ENCODE measurements at regions of chr14 and their contacts with region 1.

Region 1: DNA sequence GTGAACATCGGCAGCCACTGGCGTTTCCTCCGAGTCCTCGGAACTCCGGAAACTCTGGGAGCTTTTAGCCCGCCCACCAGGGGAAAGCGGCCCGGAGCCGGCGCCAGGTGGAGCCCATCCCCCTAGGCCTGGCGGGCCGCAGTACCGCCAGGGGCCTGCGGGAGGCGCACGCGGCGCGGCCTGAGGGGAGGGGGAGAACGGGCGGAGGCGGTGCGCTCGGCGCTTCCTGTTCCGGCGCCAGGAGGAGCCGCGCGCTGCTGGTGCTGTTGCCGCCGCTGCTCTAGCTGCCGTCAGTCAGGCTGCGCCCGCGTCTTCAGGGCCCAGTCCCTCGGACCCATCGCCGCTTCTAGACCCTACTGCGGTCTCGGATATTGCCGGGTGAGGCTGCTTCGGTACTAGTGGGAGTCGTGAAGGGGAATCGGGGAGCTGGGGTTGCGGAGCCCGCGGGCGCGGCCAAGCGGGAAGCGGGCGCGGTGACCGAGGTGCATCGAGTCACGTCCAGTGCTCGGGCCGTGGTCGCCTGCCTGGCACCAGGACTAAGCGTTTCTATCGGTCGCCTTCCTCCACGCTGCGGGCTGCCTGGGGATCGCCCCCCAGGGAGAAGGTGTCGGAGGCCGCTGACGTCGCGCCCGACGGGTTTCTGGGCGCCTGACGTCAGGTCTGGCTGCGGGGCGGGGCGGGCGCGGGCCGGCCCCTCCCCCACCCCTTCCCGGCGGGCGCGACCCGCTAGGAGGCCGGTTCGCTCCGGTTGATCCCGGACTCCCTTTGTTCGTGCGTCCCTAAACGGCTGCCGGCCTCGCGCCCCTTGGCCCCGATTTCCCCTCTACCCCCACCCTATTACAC is at the start of gene MAPK1IP1L:
- DNase-seq: peak; percentile 100
- ATAC-seq: peak; percentile 89
- H3K4me3 ChIP-seq: peak within 1 kb of the TSS; percentile 90
- H3K27ac ChIP-seq: peak within 1 kb of the TSS; percentile 87
- H3K4me1 ChIP-seq: peaks cover 31% of the 10 kb centered on the region
- H3K27me3 ChIP-seq: no peaks in the 10 kb centered on the region
- CTCF ChIP-seq: peak; percentile 100
- total RNA-seq, gene MAPK1IP1L: 73.9 and 75.9 TPM in 2 replicates

Region 2: DNA sequence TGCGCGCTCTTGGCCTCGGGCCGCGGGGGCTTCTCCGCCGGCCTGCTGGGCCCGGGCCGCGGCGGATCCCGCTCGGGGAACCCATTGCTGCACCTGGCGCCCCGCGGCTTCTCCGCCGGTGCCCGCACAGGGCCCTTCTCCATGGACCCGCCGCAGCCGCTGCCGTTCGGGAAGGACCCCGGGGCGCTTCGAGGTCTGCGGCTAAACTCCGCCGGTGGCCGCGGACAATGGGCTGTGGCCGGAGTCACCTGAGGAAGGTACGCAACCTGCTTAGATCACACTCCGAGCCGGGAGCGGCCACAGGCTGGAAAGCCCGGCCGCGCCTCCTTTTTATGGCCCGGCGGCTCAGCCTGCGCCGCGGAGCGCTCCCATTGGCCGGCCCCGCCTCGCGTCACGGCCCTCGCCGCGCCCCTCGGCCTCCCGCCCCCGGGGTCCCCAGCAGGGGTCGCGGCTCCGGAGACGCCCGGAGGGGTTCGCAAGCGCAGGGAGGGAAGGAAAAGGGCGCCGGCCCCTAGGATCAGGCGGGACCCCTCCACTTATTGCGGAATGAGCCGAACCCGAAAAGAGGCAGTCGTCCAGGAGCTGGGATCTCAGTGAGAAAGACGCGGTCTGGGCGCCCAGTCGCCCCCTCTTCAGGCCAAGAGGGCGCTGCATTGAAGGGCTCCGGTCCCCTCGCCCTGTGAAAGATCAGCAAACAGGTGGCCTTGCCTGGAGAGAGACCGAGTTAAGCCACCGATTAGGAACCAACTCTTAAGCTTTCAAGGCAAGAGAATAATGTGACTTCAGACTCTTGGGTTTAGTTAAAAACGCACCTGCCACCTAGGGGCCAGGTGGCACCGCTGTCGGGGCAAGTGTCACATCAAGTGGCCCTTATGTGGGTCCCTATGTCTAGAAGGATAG is 148.9 kb before region 1 on chr14 and contains the start of gene GCH1:
- CTCF ChIA-PET with region 1: no interaction called
- POLR2A ChIA-PET with region 1: interaction called, 3 read pairs
- intact Hi-C with region 1: loop called (anchors 1 kb)
- DNase-seq: peak; percentile 92
- ATAC-seq: peak; percentile 87
- H3K4me3 ChIP-seq: peak within 1 kb of the TSS; percentile 86
- H3K27ac ChIP-seq: peak within 1 kb of the TSS; percentile 41
- H3K4me1 ChIP-seq: peaks cover 9% of the 10 kb centered on the region
- H3K27me3 ChIP-seq: no peaks in the 10 kb centered on the region
- CTCF ChIP-seq: peak; percentile 93
- total RNA-seq, gene GCH1: 26.6 and 26.9 TPM in 2 replicates

Region 3: DNA sequence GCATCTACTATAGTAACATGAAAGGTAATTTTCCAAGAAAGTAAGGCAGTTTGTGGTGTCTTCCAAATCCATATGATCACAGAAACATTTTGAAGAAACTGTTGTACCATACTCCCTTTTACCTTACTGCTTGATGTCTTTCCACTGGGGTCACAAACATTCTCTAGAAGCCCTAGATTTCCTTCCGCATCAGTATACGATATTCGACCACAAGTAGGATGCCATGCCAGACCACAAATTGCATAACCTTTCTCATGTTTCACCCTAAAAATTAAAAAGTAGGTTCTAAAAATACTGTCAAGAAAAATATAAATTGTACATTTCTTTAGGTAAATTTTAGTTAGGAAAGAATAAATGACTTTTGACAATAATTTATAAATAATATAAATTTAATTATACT is 51.3 kb before region 1 on chr14:
- CTCF ChIA-PET with region 1: no interaction called
- POLR2A ChIA-PET with region 1: no interaction called
- intact Hi-C with region 1: no loop called
- DNase-seq: no peak
- ATAC-seq: no peak
- H3K4me3 ChIP-seq: no peak overlapping the region
- H3K27ac ChIP-seq: no peak overlapping the region
- H3K4me1 ChIP-seq: no peaks in the 10 kb centered on the region
- H3K27me3 ChIP-seq: no peaks in the 10 kb centered on the region
- CTCF ChIP-seq: no peak

Region 4: DNA sequence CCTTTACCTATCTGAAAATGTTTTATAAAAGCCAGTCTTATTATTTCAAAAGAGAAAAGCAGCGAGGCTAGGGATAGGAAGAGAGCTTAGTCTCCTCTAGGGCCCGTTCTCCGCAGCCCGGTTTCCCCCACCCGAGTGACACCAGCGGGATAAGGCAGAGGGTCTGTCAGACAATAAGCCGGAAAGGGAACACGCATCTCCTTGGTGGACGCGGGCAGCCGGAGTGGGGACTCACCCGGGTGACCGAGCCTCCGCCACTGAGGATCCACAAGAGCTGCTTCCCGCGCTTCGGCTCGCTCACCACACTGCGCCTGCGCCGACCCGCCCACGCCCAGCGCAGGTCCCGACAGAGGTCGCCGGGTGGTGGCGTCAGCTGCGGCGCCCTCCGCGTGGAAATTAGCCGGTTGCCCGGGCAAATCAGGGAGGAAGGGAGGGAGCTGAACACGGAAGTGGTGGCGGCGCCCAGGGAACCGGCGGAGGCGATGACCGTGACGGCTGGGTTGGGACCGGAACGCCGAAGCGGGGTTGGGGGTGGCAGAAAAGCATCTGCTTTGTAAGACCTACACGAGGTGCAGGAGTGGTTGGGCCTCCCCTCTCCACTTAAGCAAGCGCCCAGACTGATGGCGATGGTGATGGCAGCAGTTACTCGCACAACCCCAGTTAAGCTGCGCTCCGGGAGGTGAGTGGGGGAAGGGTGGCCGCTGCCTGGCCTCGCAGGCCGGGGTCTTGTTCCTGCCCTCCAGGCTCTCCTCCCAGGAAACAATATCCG is 24.7 kb before region 1 on chr14 and contains the starts of genes SOCS4 and WDHD1:
- CTCF ChIA-PET with region 1: interaction called, 7 read pairs
- POLR2A ChIA-PET with region 1: interaction called, 13 read pairs
- intact Hi-C with region 1: loop called (anchors 1 kb)
- DNase-seq: peak; percentile 99
- ATAC-seq: peak; percentile 92
- H3K4me3 ChIP-seq: peak within 1 kb of the TSS; percentile 75
- H3K27ac ChIP-seq: peak within 1 kb of the TSS; percentile 55
- H3K4me1 ChIP-seq: peaks cover 34% of the 10 kb centered on the region
- H3K27me3 ChIP-seq: no peaks in the 10 kb centered on the region
- CTCF ChIP-seq: peak; percentile 34
- total RNA-seq, gene SOCS4: 21.9 and 22.5 TPM in 2 replicates
- total RNA-seq, gene WDHD1: 45.9 and 47.1 TPM in 2 replicates

Region 5: DNA sequence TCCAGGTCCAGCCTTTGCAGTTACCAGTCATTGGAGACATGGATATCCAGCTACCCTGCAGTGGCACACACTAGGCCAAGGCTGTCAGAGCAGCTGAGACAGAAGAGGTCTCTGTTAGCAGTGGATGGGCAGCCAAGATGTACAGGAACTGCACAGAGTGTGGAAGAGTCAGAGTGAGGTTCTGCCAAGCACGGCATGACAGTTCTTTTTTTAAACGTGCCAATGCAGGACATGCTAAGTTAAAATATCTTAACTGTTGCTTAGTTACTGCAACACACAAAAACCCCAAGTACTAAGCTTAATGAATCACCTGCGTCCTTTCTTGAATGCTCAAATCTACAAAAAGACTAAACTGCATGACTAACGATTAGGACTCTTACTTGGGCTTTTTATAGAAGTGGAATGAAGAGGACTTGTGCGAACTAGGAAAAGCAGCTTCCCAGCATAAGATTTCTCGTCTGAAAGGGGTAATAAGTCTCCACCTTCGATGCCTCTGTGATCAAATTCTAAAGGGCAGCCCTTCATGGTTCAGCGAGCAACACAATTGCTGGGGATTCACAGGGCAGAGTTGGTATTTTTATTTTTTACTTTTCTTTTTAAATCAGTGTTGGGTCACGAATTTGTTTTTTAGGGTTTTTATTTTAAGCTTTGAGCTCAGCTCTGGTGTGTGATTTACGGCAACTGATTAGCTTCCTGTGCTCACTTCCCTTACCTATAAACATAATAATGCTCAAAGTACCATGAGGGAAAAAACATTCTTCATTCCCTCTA is 20.4 kb after region 1 on chr14:
- CTCF ChIA-PET with region 1: interaction called, 12 read pairs
- POLR2A ChIA-PET with region 1: no interaction called
- intact Hi-C with region 1: loop called (anchors 2 kb)
- DNase-seq: peak; percentile 75
- ATAC-seq: peak; percentile 72
- H3K4me3 ChIP-seq: no peak overlapping the region
- H3K27ac ChIP-seq: peak overlapping the region; percentile 52
- H3K4me1 ChIP-seq: peaks cover 9% of the 10 kb centered on the region; the same call in 1 of the 2 replicates
- H3K27me3 ChIP-seq: no peaks in the 10 kb centered on the region
- CTCF ChIP-seq: no peak

Region 6: DNA sequence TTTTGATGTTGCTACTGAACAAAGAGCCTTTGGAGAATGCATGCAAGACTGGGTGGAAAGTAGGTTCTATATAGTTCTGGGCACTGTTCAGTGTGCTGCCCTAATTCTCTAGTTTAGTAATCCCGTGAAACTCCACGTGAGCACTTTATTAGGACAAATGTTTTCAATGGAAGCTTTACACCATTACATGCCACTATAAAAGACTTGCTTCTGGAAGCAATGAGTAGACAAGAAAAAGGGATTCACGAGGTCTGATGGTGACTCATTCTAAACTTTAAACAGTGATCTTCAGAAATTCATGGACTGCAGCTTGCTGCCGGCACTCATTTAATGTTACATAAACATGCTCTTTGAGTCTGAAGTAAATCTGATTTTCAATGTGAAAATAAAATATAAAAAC is 337.7 kb after region 1 on chr14:
- CTCF ChIA-PET with region 1: no interaction called
- POLR2A ChIA-PET with region 1: no interaction called
- intact Hi-C with region 1: no loop called
- DNase-seq: peak; percentile 79
- ATAC-seq: peak; percentile 82
- H3K4me3 ChIP-seq: no peak overlapping the region
- H3K27ac ChIP-seq: peak overlapping the region; percentile 74
- H3K4me1 ChIP-seq: peaks cover 54% of the 10 kb centered on the region
- H3K27me3 ChIP-seq: no peaks in the 10 kb centered on the region
- CTCF ChIP-seq: no peak

Measured in PC-3 (cell line).